Posterior cingulate gyrus (tissue), 11 donors: ENCODE measurements at regions of chr10 and their contacts with region 1.

Region 1: GRCh38 chr10:114876602-114877300 is 55.2 kb downstream of the FHIP2A start:
- DNase-seq: peak; percentile 46 to 94 (median 73)

Region 2: DNA sequence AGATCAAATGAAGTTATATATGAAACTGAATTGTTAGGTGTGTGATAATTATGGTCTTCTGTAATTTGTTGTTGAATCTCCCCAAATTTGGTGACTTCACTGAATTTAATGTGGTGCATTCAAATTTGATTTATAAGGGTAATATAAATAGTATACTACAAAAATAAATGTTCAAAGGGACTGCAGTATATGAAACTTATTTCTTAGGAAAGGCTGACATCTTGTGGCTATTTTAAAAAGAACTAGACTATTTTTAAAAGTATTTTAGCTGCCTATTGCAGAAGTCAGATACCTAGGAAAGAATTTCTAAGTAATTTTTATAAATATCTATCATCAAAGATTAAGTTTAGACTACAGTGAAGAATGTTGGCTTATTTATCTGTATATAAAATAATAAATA is 253.0 kb after region 1 on chr10:
- intact Hi-C with region 1: loop called (anchors 1 kb)
- DNase-seq: no peak

Region 3: DNA sequence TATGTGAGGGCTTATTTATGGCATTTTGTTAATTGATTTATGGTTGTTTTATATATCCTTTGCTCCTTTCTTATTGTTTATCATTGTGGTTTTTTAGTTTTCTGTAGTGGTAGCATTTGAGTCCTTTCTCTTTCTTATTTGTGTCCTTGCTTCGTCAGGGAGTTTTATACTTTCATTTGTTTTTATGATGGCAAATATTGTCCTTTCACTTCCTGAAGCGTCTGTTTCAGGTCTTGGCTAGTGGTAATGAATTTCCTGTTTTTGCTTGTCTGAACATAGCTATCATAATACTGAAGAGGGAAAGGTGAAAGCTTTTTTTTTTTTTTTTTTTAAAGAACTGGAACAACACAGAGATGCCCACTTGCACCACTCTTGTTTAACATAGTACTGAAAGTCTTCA is 444.6 kb after region 1 on chr10:
- intact Hi-C with region 1: no loop called
- DNase-seq: no peak